ENCODE measurements at regions of chr13 and their contacts with region 1.

Region 1: DNA sequence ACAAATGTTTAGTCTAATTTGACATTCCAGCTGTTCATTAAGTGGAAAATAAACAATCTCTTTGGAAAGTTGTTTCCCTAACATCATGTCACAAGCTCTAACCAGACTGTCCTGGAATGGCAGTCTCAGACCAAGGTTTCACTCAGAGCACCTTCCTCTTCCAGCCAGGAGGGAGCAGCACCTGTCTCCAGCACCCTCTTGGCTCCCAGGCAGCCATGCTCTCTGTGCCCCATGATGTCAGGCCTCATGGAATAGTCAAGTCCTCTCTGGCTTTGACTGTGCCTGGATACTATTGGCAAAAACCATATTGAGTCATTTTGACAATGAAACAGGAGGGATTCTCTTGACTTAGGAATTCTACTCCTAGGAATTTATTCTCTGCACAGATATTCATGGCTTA is 171.4 kb downstream of the OXGR1 start:
- DNase-seq: peak; percentile 21
- H3K4me3 ChIP-seq: no peak overlapping the region
- H3K27ac ChIP-seq: no peak overlapping the region
- H3K4me1 ChIP-seq: no peaks in the 10 kb centered on the region
- H3K27me3 ChIP-seq: no peaks in the 10 kb centered on the region
- CTCF ChIP-seq: peak; percentile 40 to 77

Region 2: DNA sequence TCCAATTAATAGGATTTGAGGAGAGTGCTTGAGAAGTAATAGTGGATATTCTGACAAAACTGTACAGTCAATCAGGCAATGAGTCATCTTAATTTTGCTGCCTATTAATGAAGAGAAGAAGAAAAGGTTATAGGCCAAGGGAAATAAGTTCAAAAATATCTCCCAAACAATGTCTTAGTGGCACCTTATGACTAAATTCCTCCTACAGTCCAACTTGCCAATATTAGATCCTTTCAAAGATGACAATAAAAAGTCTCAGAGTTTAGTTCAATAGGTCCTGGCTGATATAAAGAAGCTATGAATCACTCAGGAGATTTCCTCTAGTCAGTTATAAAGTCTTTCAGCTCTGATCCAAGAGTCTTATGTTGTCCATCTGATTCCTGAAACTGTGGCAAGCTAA is 797.6 kb before region 1 on chr13:
- CTCF ChIA-PET with region 1: no interaction called
- dilution Hi-C with region 1: no loop called
- in situ Hi-C with region 1: loop called in 1 of 2 experiments (anchors 25 kb)
- intact Hi-C with region 1: no loop called
- DNase-seq: no peak
- H3K4me3 ChIP-seq: no peak overlapping the region
- H3K27ac ChIP-seq: no peak overlapping the region
- H3K4me1 ChIP-seq: no peaks in the 10 kb centered on the region
- H3K27me3 ChIP-seq: no peaks in the 10 kb centered on the region
- CTCF ChIP-seq: no peak

Region 3: GRCh38 chr13:96958286-96958891 is 135.5 kb after region 1 on chr13:
- CTCF ChIA-PET with region 1: no interaction called
- dilution Hi-C with region 1: no loop called
- in situ Hi-C with region 1: no loop called
- intact Hi-C with region 1: loop called (anchors 2 kb)
- DNase-seq: peak; percentile 4
- H3K4me3 ChIP-seq: no peak overlapping the region
- H3K27ac ChIP-seq: no peak overlapping the region
- H3K4me1 ChIP-seq: no peaks in the 10 kb centered on the region
- H3K27me3 ChIP-seq: no peaks in the 10 kb centered on the region
- CTCF ChIP-seq: peak; percentile 78 to 84

Region 4: GRCh38 chr13:96994017-96994857 is 171.3 kb after region 1 on chr13 and contains the start of gene OXGR1:
- CTCF ChIA-PET with region 1: no interaction called
- dilution Hi-C with region 1: no loop called
- in situ Hi-C with region 1: no loop called
- intact Hi-C with region 1: no loop called
- DNase-seq: no peak
- H3K4me3 ChIP-seq: peak within 1 kb of the TSS; percentile 21 to 47 (median 26)
- H3K27ac ChIP-seq: no peak within 1 kb of the TSS
- H3K4me1 ChIP-seq: peaks cover 11% of the 10 kb centered on the region
- H3K27me3 ChIP-seq: peaks cover 19% of the 10 kb centered on the region
- CTCF ChIP-seq: no peak
- total RNA-seq, gene OXGR1: not detected

Region 5: DNA sequence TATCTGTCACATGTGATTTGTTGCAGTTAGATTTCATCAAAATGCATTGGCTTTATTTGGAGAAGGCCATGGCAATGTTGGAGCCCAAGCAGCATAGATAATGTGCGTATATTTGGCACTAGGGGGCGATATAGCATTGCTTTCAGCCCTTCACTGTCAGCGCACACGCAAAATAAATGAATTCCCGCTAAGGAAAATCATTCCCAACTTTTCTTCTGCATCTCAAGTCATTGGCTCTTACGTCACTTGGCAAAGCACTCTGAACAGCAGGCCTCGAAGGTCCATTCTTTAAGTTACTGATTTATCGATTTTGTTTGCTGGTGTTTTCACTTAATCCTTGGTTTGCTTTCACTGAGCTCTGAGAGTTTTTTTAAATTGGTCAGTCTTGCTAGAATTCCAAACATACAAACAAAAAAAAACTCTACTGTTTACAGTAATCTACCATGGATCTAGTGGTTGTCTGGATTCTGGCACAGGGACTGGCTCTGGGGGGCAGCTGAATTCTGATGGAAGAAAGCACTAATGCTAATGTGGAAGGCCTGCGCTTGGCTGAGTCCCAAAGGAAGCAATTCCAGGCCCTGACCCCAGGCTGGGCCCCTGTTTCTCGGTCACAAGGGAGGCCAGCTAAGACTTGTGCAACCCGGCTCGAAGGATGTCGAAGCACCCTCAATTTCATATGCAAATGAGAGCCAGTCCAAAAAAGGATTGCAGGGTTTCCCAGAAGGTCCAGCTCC is 1032.8 kb after region 1 on chr13:
- CTCF ChIA-PET with region 1: no interaction called
- dilution Hi-C with region 1: no loop called
- in situ Hi-C with region 1: no loop called
- intact Hi-C with region 1: no loop called
- DNase-seq: peak; percentile 39
- H3K4me3 ChIP-seq: no peak overlapping the region
- H3K27ac ChIP-seq: no peak overlapping the region
- H3K4me1 ChIP-seq: no peaks in the 10 kb centered on the region
- H3K27me3 ChIP-seq: no peaks in the 10 kb centered on the region
- CTCF ChIP-seq: peak; percentile 83 to 93

Measured in mammary epithelial cell (primary cell).